ENCODE measurements at regions of chr7 and their contacts with region 1.

Region 1: DNA sequence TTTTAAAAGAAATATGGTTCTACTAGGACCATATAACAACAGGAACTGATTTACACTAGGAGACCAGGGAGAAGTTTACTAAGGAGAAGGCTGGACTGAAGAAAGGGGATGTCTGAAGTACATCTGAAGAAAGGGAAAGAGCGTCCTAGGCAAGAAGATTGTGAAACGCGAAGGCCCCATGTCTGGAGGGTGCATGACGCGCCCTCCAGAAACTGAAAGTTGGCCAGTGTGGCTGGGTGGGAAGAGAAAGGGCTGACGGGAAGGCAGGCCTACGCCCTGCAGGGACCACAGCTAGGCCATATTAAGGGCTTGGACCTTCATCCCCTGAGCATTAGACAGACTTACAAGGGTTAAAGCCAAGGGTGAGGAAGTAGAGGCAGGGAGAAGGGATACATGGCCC is 158.0 kb downstream of the TRIL start:
- DNase-seq: no peak
- H3K4me3 ChIP-seq: no peak overlapping the region
- H3K27ac ChIP-seq: no peak overlapping the region
- H3K4me1 ChIP-seq: peaks cover 0 to 3% of the 10 kb centered on the region in 2 experiments; a peak in 1 of 4 replicates
- H3K27me3 ChIP-seq: no peaks in the 10 kb centered on the region
- CTCF ChIP-seq: no peak
- EP300 ChIP-seq: no peak
- RAD21 ChIP-seq: no peak

Region 2: DNA sequence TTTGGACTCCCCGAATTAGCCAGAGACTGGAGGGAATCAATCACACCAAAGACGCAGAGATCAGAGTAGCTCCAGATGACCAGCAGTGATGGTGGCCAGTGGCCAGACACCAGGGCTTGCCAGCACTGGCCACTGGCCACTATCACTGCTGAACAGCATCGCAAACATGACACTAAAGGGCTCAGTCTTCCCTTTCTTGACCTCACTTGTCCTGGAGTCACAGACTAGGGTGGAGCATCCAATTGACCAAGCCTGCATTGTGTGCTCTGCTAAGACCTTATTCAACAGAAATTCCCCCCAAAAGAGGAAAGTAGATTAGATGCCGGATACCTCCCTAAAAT is 153.1 kb before region 1 on chr7:
- CTCF ChIA-PET with region 1: no interaction called
- POLR2A ChIA-PET with region 1: no interaction called
- DNase-seq: no peak
- H3K4me3 ChIP-seq: no peak overlapping the region
- H3K27ac ChIP-seq: no peak overlapping the region
- H3K4me1 ChIP-seq: no peaks in the 10 kb centered on the region
- H3K27me3 ChIP-seq: peaks cover 4% of the 10 kb centered on the region; the same call in 1 of the 2 replicates
- CTCF ChIP-seq: no peak
- EP300 ChIP-seq: no peak
- RAD21 ChIP-seq: no peak

Region 3: GRCh38 chr7:28738412-28738811 is 61.7 kb before region 1 on chr7:
- CTCF ChIA-PET with region 1: no interaction called
- POLR2A ChIA-PET with region 1: no interaction called
- DNase-seq: no peak
- H3K4me3 ChIP-seq: no peak overlapping the region
- H3K27ac ChIP-seq: no peak overlapping the region
- H3K4me1 ChIP-seq: peaks cover 0 to 2% of the 10 kb centered on the region in 2 experiments; a peak in 1 of 4 replicates
- H3K27me3 ChIP-seq: no peaks in the 10 kb centered on the region
- CTCF ChIP-seq: no peak
- EP300 ChIP-seq: no peak
- RAD21 ChIP-seq: no peak

Region 4: GRCh38 chr7:28813243-28813962 is 13.3 kb after region 1 on chr7:
- CTCF ChIA-PET with region 1: interaction called, 13 read pairs
- POLR2A ChIA-PET with region 1: no interaction called
- DNase-seq: no peak
- H3K4me3 ChIP-seq: no peak overlapping the region
- H3K27ac ChIP-seq: no peak overlapping the region
- H3K4me1 ChIP-seq: peaks cover 0 to 8% of the 10 kb centered on the region in 2 experiments; a peak in 1 of 4 replicates
- H3K27me3 ChIP-seq: no peaks in the 10 kb centered on the region
- CTCF ChIP-seq: no peak
- EP300 ChIP-seq: no peak
- RAD21 ChIP-seq: no peak

Measured in SK-N-SH (cell line).